MCF 10A (cell line): ENCODE measurements at regions of chr3 and their contacts with region 1.

Region 1: GRCh38 chr3:105868742-105869530 is at the start of gene CBLB:
- DNase-seq: peak; percentile 97
- H3K4me3 Mint-ChIP-seq: peak within 1 kb of the TSS; percentile 92
- H3K27ac Mint-ChIP-seq: peak within 1 kb of the TSS; percentile 97
- H3K4me1 Mint-ChIP-seq: peaks cover 35% of the 10 kb centered on the region
- H3K27me3 Mint-ChIP-seq: no peaks in the 10 kb centered on the region
- CTCF ChIP-seq: no peak
- total RNA-seq, gene CBLB: 19.7 and 43.4 TPM in 2 replicates

Region 2: GRCh38 chr3:105715372-105715771 is 153.6 kb before region 1 on chr3:
- CTCF ChIA-PET with region 1: no interaction called
- POLR2A ChIA-PET with region 1: no interaction called
- intact Hi-C with region 1: loop called (anchors 10 kb)
- DNase-seq: peak; percentile 62
- H3K4me3 Mint-ChIP-seq: no peak overlapping the region
- H3K27ac Mint-ChIP-seq: no peak overlapping the region
- H3K4me1 Mint-ChIP-seq: no peaks in the 10 kb centered on the region
- H3K27me3 Mint-ChIP-seq: no peaks in the 10 kb centered on the region
- CTCF ChIP-seq: no peak

Region 3: GRCh38 chr3:105883798-105884377 is 15.0 kb after region 1 on chr3:
- CTCF ChIA-PET with region 1: interaction called, 3 read pairs
- POLR2A ChIA-PET with region 1: interaction called, 12 read pairs
- intact Hi-C with region 1: no loop called
- DNase-seq: peak; percentile 9
- H3K4me3 Mint-ChIP-seq: no peak overlapping the region
- H3K27ac Mint-ChIP-seq: no peak overlapping the region
- H3K4me1 Mint-ChIP-seq: peaks cover 8% of the 10 kb centered on the region
- H3K27me3 Mint-ChIP-seq: no peaks in the 10 kb centered on the region
- CTCF ChIP-seq: no peak

Region 4: GRCh38 chr3:106030618-106030945 is 161.6 kb after region 1 on chr3:
- CTCF ChIA-PET with region 1: no interaction called
- POLR2A ChIA-PET with region 1: no interaction called
- intact Hi-C with region 1: loop called (anchors 5 kb)
- DNase-seq: peak; percentile 10
- H3K4me3 Mint-ChIP-seq: no peak overlapping the region
- H3K27ac Mint-ChIP-seq: peak overlapping the region; percentile 10
- H3K4me1 Mint-ChIP-seq: peaks cover 12% of the 10 kb centered on the region
- H3K27me3 Mint-ChIP-seq: no peaks in the 10 kb centered on the region
- CTCF ChIP-seq: no peak

Region 5: DNA sequence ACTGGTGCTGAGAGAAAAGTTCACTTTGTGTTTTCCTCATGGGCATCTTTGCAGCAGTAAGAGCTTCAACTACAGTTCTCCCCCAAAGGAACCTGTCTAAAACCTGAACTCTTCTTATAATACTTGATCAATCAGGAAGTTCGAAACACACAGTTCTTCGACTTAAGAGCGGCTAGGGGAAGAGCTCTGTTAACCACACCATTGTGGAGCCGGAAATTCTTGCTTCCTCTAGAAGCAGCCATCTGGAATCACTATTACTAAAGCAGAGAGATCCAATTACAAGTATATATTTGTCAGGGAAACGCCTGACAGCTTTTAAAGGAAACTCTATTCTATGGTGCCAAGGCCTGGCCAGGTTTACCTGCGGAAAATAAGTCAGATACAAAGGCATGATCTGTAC is 337.2 kb after region 1 on chr3:
- CTCF ChIA-PET with region 1: no interaction called
- POLR2A ChIA-PET with region 1: interaction called, 4 read pairs
- intact Hi-C with region 1: loop called (anchors 5 kb)
- DNase-seq: no peak
- H3K4me3 Mint-ChIP-seq: no peak overlapping the region
- H3K27ac Mint-ChIP-seq: no peak overlapping the region
- H3K4me1 Mint-ChIP-seq: no peaks in the 10 kb centered on the region
- H3K27me3 Mint-ChIP-seq: no peaks in the 10 kb centered on the region
- CTCF ChIP-seq: no peak

Region 6: GRCh38 chr3:106609666-106610301 is 740.8 kb after region 1 on chr3:
- CTCF ChIA-PET with region 1: interaction called, 3 read pairs
- POLR2A ChIA-PET with region 1: interaction called, 8 read pairs
- intact Hi-C with region 1: loop called (anchors 2 kb)
- DNase-seq: peak; percentile 85
- H3K4me3 Mint-ChIP-seq: no peak overlapping the region
- H3K27ac Mint-ChIP-seq: peak overlapping the region; percentile 65
- H3K4me1 Mint-ChIP-seq: peaks cover 22% of the 10 kb centered on the region
- H3K27me3 Mint-ChIP-seq: no peaks in the 10 kb centered on the region
- CTCF ChIP-seq: peak; percentile 86